CD4-positive, alpha-beta T cell (primary cell): ENCODE measurements at regions of chr11 and their contacts with region 1.

Region 1: DNA sequence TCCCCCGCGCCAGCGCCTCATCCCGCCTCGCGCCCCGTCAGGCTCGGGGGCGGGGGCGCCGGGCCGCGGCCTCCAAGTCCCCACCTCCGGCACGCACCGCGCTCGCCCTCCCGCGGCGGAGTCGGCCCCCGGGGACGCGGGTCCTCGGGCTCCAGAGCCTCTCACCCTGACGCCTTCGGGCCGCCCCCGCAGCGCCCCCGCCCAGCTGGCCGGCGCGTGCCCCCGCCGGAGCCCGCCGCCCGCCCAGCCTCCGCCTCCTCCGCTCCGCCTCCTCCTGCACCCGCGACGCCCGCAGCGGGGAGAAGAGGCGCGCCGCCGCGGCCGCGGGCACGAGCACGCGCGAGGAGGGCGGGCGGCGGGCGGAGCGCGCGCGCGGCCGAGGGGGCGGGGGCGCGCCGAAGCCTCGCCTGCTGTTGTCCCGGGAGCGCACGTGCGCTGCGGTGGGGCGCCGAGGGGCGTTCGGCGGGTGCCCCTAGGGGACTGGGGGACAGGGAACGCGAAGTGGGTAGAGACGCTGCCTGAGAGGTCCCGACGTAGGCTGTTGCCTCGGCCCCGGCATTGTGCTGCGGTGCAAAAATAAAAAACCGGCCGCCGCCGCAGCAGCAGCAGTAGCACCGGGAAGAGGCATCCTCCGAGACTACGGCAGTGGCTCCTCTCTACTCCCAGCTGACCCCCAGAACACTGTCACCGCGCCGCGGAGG is 87.4 kb upstream of the ARHGAP32 start:
- DNase-seq: peak; percentile 50 to 89 (median 72)
- ATAC-seq: peak; percentile 80
- H3K4me3 ChIP-seq: peak overlapping the region; percentile 65
- H3K4me3 Mint-ChIP-seq: peak overlapping the region; percentile 88
- H3K27ac ChIP-seq: no peak overlapping the region
- H3K27ac Mint-ChIP-seq: peak overlapping the region; percentile 66
- H3K4me1 ChIP-seq: peaks cover 16% of the 10 kb centered on the region
- H3K4me1 Mint-ChIP-seq: peaks cover 41% of the 10 kb centered on the region
- H3K27me3 ChIP-seq: peaks cover 11 to 12% of the 10 kb centered on the region in 2 experiments
- H3K27me3 Mint-ChIP-seq: peaks cover 18% of the 10 kb centered on the region
- CTCF ChIP-seq: no peak

Region 2: GRCh38 chr11:129324533-129325175 is 45.2 kb after region 1 on chr11:
- CTCF ChIA-PET with region 1: no interaction called
- POLR2A ChIA-PET with region 1: no interaction called
- intact Hi-C with region 1: loop called in 1 of 2 experiments (anchors 5 kb)
- DNase-seq: no peak
- ATAC-seq: no peak
- H3K4me3 ChIP-seq: no peak overlapping the region
- H3K4me3 Mint-ChIP-seq: no peak overlapping the region
- H3K27ac ChIP-seq: no peak overlapping the region
- H3K27ac Mint-ChIP-seq: no peak overlapping the region
- H3K4me1 ChIP-seq: no peaks in the 10 kb centered on the region
- H3K4me1 Mint-ChIP-seq: no peaks in the 10 kb centered on the region
- H3K27me3 ChIP-seq: no peaks in the 10 kb centered on the region
- H3K27me3 Mint-ChIP-seq: no peaks in the 10 kb centered on the region
- CTCF ChIP-seq: no peak

Region 3: DNA sequence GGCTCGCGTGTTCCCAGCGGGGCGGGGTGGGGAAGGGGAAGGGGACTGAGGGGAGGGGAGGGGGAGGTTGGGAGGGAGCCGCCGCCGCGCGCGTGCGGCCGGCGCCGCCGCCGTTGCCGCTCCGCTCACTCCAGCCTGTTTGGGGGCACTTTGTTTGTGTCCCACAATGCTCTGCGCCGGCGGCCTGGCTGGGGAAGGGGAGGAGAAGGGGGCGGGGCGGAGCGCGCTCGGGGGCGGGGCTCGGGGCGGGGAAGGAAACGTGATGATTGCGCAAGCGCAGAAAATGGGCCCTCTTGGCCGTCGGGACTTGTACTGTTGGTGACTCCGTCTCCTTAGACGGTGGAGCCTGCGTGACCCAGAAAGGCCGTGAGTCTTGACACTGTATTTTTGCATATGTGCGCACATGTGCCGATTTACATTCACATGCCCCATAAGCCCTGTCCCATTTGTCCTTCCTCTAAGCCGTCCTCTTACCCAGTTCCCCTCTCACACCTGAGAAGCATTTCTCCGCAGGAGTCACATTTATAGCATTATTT is 1035.3 kb after region 1 on chr11 and contains the start of gene ZBTB44:
- CTCF ChIA-PET with region 1: no interaction called
- POLR2A ChIA-PET with region 1: no interaction called
- intact Hi-C with region 1: loop called in 1 of 2 experiments (anchors 5 kb)
- DNase-seq: peak; percentile 87 to 95 (median 92)
- ATAC-seq: peak; percentile 78
- H3K4me3 ChIP-seq: peak within 1 kb of the TSS; percentile 80
- H3K4me3 Mint-ChIP-seq: peak within 1 kb of the TSS; percentile 93
- H3K27ac ChIP-seq: peak within 1 kb of the TSS; percentile 69 to 87
- H3K27ac Mint-ChIP-seq: peak within 1 kb of the TSS; percentile 97
- H3K4me1 ChIP-seq: peaks cover 16% of the 10 kb centered on the region
- H3K4me1 Mint-ChIP-seq: peaks cover 48% of the 10 kb centered on the region
- H3K27me3 ChIP-seq: no peaks in the 10 kb centered on the region
- H3K27me3 Mint-ChIP-seq: no peaks in the 10 kb centered on the region
- CTCF ChIP-seq: no peak
- total RNA-seq, gene ZBTB44: 33.9 to 41.6 TPM